ENCODE measurements at regions of chr1 and their contacts with region 1.

Region 1: DNA sequence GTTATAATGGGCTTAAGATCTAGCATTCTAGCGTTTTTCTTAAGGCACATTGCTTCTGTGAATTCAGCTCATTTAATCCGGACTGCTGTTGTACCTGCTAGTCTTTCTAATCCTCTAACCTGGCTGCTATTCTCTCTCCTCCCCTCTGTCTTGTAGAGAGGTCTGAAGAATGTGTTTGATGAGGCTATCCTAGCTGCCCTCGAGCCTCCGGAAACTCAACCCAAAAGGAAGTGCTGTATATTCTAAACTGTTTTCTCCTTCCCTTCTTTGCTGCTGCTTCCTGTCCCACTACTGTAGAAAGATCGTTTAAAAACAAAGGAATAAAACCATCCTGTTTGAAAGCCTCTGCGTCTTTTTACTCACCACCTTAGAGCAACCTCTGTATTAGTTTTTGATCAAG is 37.3 kb downstream of the CDC42 start:
- DNase-seq: no peak
- H3K4me3 ChIP-seq: no peak overlapping the region
- H3K27ac ChIP-seq: no peak overlapping the region
- H3K4me1 ChIP-seq: peaks cover 29% of the 10 kb centered on the region
- H3K27me3 ChIP-seq: no peaks in the 10 kb centered on the region
- CTCF ChIP-seq: no peak

Region 2: DNA sequence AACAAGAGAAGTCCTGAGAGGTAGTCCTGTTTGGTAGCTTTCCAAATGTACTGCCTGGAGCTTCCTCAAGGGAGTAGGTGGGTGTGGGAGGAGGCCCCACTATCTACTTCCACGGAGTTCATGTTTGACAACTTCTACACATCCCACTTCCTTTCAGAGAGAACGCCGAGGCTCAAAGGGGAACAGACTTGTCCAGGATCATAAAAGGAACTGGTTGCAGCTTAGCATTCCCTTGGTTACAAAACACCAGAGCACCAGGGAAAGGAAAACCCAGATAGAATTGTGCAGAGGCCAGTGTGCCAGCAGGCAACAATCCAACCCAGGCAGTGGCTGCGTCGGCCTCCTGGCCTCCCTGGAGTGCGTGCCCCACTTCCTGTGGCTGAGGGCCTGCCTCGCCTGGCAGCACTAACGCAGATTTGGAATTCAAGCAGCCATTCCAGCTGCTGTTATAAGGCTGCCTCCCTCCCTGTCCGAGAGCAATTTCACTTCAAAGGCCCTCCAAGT is 416.5 kb before region 1 on chr1:
- CTCF ChIA-PET with region 1: no interaction called
- dilution Hi-C with region 1: no loop called
- in situ Hi-C with region 1: no loop called
- intact Hi-C with region 1: no loop called
- DNase-seq: no peak
- H3K4me3 ChIP-seq: no peak overlapping the region
- H3K27ac ChIP-seq: no peak overlapping the region
- H3K4me1 ChIP-seq: peaks cover 7% of the 10 kb centered on the region
- H3K27me3 ChIP-seq: peaks cover 8% of the 10 kb centered on the region
- CTCF ChIP-seq: no peak

Region 3: GRCh38 chr1:21801100-21801499 is 288.7 kb before region 1 on chr1:
- CTCF ChIA-PET with region 1: no interaction called
- dilution Hi-C with region 1: no loop called
- in situ Hi-C with region 1: no loop called
- intact Hi-C with region 1: no loop called
- DNase-seq: peak; percentile 77
- H3K4me3 ChIP-seq: no peak overlapping the region
- H3K27ac ChIP-seq: no peak overlapping the region
- H3K4me1 ChIP-seq: no peaks in the 10 kb centered on the region
- H3K27me3 ChIP-seq: no peaks in the 10 kb centered on the region
- CTCF ChIP-seq: no peak

Region 4: DNA sequence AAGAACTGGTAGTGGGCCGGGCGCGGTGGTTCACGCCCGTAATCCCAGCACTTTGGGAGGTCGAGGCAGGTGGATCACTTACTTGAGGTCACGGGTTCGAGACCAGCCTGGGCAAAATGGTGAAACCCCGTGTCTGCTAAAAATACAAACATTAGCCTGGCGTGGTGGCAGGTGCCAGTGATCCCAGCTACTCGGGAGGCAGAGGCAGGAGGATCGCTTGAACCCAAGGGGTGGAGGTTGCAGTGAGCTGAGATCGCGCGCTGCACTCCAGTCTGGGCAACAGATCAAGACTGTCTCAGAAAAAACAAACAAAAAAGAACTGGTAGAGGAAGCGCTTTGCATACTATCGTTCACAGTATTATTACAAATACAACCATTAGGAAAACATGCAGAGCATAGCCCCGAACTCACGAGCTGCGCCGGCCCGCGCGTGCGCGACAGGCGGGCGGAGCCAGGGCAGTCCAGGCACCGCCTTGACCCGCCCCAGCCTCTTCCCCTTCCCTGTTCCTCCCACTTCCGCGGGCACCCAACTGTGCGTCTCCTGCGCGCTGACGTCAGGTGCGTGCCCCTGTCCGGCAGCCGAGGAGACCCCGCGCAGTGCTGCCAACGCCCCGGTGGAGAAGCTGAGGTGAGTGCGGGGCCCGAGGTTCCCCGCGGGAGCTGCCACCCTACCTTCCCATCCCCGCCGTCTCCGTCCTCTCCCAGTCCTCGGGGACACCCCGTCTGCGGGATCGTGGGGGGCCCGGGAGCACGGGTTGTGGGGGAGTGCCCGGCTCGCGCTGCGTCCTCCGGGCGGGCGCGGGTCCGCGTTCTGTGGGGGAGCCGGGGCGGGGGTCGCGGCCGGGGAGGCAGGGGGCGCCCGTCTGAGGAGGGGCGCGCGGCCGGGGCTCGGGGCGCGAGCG is 37.4 kb before region 1 on chr1 and contains the start of gene CDC42:
- CTCF ChIA-PET with region 1: no interaction called
- dilution Hi-C with region 1: loop called (anchors 5 kb)
- in situ Hi-C with region 1: no loop called
- intact Hi-C with region 1: no loop called
- DNase-seq: peak; percentile 95
- H3K4me3 ChIP-seq: peak within 1 kb of the TSS; percentile 73 to 86 (median 77)
- H3K27ac ChIP-seq: peak within 1 kb of the TSS; percentile 79
- H3K4me1 ChIP-seq: peaks cover 15% of the 10 kb centered on the region
- H3K27me3 ChIP-seq: no peaks in the 10 kb centered on the region
- CTCF ChIP-seq: no peak
- total RNA-seq, gene CDC42: 234 to 414 TPM

Region 5: DNA sequence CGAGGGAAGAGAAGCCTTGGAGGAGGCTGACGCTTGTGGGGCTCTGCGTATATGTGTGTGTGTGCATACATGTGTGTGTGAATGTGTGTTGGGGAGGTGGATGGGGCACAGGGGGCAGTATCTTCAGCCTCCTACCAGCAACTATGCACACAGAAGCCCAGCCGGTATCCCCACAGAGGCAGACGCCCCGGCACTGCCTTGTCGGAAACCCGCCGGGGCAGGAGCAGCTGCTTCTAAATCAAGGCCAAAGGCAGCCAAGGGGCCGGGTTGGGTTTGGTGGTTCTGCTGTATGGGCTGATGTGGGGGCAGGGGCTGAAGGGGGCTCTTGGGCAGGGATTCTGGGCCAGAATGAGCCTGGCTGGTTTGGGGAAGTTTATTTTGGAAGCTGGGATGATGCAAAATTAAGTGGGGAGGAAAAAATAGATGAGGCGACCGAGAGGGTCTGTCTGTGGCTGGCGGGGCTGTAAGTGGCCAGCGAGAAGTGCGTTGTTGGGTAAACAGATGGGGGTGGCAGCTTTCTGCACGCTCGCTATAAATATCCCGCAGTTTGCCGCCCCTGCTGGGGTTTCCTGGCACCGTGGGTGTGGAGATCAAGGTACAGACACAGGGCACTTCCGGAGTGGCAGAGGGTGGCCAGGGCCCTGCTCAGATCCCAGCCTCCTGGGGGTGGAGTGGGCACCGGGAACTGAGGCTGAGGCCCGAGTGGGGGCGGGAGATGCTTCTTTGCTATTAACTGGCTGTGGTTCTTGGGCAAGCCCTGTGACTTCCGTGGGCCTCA is 64.1 kb after region 1 on chr1:
- CTCF ChIA-PET with region 1: no interaction called
- dilution Hi-C with region 1: loop called (anchors 5 kb)
- in situ Hi-C with region 1: no loop called
- intact Hi-C with region 1: no loop called
- DNase-seq: no peak
- H3K4me3 ChIP-seq: no peak overlapping the region
- H3K27ac ChIP-seq: no peak overlapping the region
- H3K4me1 ChIP-seq: no peaks in the 10 kb centered on the region
- H3K27me3 ChIP-seq: no peaks in the 10 kb centered on the region
- CTCF ChIP-seq: no peak

Region 6: GRCh38 chr1:22562584-22563583 is 473.1 kb after region 1 on chr1 and contains the start of gene EPHA8:
- CTCF ChIA-PET with region 1: no interaction called
- dilution Hi-C with region 1: no loop called
- in situ Hi-C with region 1: no loop called
- intact Hi-C with region 1: no loop called
- DNase-seq: no peak
- H3K4me3 ChIP-seq: no peak within 1 kb of the TSS
- H3K27ac ChIP-seq: no peak within 1 kb of the TSS
- H3K4me1 ChIP-seq: no peaks in the 10 kb centered on the region
- H3K27me3 ChIP-seq: peaks cover 27% of the 10 kb centered on the region
- CTCF ChIP-seq: no peak
- total RNA-seq, gene EPHA8: not detected